ENCODE measurements at regions of chr7 and their contacts with region 1.

Region 1: DNA sequence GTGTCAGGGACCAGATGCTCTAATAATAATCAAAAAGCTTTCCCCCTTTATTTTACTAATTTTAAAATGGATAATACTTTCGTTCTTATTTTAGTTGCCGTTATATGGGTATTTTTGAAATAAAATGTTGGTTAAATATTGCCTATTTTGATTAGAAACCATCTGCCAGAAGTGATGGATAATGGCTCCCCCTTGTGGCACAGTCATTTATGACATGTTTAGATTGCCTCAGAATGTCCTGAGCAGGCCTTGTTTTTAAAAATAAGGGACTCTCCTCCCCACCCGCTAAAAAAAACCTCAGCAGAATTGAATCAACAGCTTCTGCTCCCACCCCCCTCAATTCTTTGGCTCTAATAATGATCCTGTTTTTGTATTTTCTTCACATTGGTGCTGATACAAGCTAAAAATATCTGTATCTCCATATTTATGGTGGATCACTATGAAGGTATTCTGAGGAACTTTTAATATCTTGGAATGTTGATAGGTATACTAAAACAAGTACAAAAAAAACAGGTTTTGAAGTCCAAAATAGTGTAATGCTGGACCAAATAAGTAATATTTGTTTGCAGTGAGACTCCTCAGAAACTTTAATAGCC is 38.8 kb downstream of the TMEM60 start:
- DNase-seq: peak in 35 of 42 donors; percentile 31 to 93 (median 68)

Region 2: GRCh38 chr7:77651573-77652162 is 107.7 kb before region 1 on chr7:
- intact Hi-C with region 1: loop called (anchors 2 kb)
- DNase-seq: peak in 18 of 42 donors; percentile 22 to 82 (median 46)

Region 3: DNA sequence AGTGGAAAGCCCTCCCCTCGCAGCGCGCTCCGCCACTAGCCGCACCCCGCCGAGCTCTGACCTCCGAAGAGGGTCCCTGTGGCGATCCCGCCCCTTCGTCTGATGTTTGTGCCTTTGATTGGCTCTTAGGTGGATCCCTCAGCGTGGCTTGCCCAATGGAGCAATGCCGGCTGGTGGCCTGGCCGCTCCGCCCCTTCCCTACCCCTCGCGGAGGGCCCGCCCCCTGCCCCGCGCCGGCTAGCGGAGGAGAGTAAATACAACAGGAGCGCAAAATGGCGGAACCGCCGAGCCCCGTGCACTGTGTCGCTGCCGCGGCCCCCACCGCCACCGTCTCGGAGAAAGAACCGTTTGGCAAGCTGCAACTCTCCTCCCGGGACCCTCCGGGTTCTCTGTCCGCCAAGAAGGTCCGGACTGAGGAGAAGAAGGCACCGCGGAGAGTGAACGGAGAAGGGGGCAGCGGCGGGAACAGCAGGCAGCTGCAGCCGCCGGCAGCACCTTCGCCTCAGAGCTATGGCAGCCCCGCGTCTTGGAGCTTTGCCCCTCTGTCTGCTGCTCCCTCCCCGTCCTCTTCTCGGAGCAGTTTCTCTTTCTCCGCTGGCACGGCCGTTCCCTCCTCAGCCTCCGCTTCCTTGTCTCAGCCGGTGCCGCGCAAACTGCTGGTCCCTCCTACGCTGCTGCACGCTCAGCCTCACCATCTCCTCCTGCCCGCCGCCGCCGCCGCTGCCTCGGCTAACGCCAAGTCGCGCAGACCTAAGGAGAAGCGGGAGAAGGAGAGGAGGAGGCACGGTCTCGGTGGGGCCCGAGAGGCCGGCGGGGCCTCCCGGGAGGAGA is 63.0 kb before region 1 on chr7 and contains the start of gene RSBN1L:
- intact Hi-C with region 1: loop called (anchors 10 kb)
- DNase-seq: peak; percentile 97 to 100 (median 99)

Region 4: DNA sequence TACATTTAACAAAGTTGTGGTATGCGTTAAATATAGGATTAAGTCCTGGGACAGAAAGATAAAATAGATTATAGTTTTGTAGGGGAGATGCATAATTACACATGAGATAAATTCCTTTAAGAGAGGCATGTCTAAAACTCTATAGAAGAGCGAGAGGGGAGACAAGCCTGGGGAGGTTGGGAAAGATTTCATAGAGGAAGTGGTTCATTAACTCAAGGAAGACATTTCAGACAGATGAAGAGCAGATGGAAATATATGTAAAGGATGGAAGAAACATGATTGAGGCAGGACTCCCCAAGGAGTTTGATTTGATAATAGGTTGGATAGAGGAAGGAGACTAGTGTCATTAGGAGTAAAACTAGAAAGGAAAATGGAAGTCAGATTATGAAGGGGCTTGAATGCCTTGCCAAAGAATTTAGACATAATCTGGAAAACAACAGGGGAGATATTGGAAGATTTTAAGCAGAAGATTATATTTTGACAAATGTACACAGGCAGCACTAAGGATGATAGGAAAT is 135.2 kb after region 1 on chr7:
- intact Hi-C with region 1: no loop called
- DNase-seq: no peak